Activated T-helper 2 cell treated with anti-CD3 and anti-CD28 coated beads, Interferon-gamma antibody, Interleukin-2, Interleukin-4, amounts not matched to agents 10 μg/mL and 5 μg/mL and 100 μg/mL, durations not matched to agents 14 hours and 24 hours and 36 hours (primary cell): ENCODE measurements at regions of chr3 and their contacts with region 1.

Region 1: GRCh38 chr3:37072892-37073291 is 79.6 kb downstream of the MLH1 start:
- DNase-seq: no peak
- H3K4me3 Mint-ChIP-seq: no peak overlapping the region
- H3K27ac Mint-ChIP-seq: no peak overlapping the region
- H3K4me1 Mint-ChIP-seq: peaks cover 14% of the 10 kb centered on the region
- H3K27me3 Mint-ChIP-seq: no peaks in the 10 kb centered on the region

Region 2: DNA sequence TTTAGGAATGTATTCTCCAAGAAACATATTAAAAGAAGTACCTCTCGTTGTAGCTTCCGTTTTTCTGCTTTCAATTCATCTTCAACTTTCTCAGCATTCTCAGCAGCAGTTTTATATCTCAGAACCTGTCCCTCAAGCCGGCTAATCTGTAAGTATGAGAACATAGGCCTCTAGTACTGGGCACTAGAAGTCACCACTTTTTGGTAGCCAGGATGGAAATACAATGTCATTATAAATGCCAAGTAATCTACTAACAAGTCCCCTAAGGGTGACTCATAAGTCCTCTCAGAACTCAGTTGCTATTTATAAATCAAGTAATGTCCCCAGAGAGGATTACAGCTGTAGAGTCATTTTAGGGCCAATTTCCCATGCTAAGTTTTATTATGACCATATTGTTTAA is 18.5 kb before region 1 on chr3:
- intact Hi-C with region 1: loop called (anchors 1 kb)
- DNase-seq: no peak
- H3K4me3 Mint-ChIP-seq: no peak overlapping the region
- H3K27ac Mint-ChIP-seq: peak overlapping the region; percentile 81
- H3K4me1 Mint-ChIP-seq: peaks cover 10% of the 10 kb centered on the region
- H3K27me3 Mint-ChIP-seq: no peaks in the 10 kb centered on the region